Activated B cell treated with CpG ODN at 0.5 μM for 24 hours (primary cell): ENCODE measurements at regions of chr5 and their contacts with region 1.

Region 1: GRCh38 chr5:43040287-43041098 is at the start of gene ANXA2R:
- DNase-seq: peak; percentile 78
- ATAC-seq: peak; percentile 62
- H3K4me3 Mint-ChIP-seq: peak within 1 kb of the TSS; percentile 96
- H3K27ac Mint-ChIP-seq: peak within 1 kb of the TSS; percentile 98
- H3K4me1 Mint-ChIP-seq: peaks cover 53% of the 10 kb centered on the region
- H3K27me3 Mint-ChIP-seq: no peaks in the 10 kb centered on the region
- CTCF ChIP-seq: peak; percentile 39
- total RNA-seq, gene ANXA2R: 6.7 and 7.9 TPM in 2 replicates

Region 2: GRCh38 chr5:41924872-41925554 is 1115.5 kb before region 1 on chr5 and contains the start of gene FBXO4:
- CTCF ChIA-PET with region 1: no interaction called
- POLR2A ChIA-PET with region 1: no interaction called
- intact Hi-C with region 1: loop called (anchors 1 kb)
- DNase-seq: peak; percentile 82
- ATAC-seq: peak; percentile 95
- H3K4me3 Mint-ChIP-seq: peak within 1 kb of the TSS; percentile 93
- H3K27ac Mint-ChIP-seq: peak within 1 kb of the TSS; percentile 97
- H3K4me1 Mint-ChIP-seq: peaks cover 24% of the 10 kb centered on the region
- H3K27me3 Mint-ChIP-seq: no peaks in the 10 kb centered on the region
- CTCF ChIP-seq: no peak
- total RNA-seq, gene FBXO4: 14.8 and 15.9 TPM in 2 replicates

Region 3: GRCh38 chr5:42950440-42951292 is 89.8 kb before region 1 on chr5:
- CTCF ChIA-PET with region 1: interaction called, 38 read pairs
- POLR2A ChIA-PET with region 1: interaction called, 126 read pairs
- intact Hi-C with region 1: loop called (anchors 1 kb)
- DNase-seq: no peak
- ATAC-seq: peak; percentile 48
- H3K4me3 Mint-ChIP-seq: peak overlapping the region; percentile 94
- H3K27ac Mint-ChIP-seq: peak overlapping the region; percentile 98
- H3K4me1 Mint-ChIP-seq: peaks cover 33% of the 10 kb centered on the region
- H3K27me3 Mint-ChIP-seq: no peaks in the 10 kb centered on the region
- CTCF ChIP-seq: no peak

Region 4: GRCh38 chr5:43008369-43009153 is 31.9 kb before region 1 on chr5:
- CTCF ChIA-PET with region 1: interaction called, 25 read pairs
- POLR2A ChIA-PET with region 1: interaction called, 261 read pairs
- intact Hi-C with region 1: loop called (anchors 1 kb)
- DNase-seq: peak; percentile 77
- ATAC-seq: peak; percentile 53
- H3K4me3 Mint-ChIP-seq: peak overlapping the region; percentile 89
- H3K27ac Mint-ChIP-seq: peak overlapping the region; percentile 98
- H3K4me1 Mint-ChIP-seq: peaks cover 31% of the 10 kb centered on the region
- H3K27me3 Mint-ChIP-seq: no peaks in the 10 kb centered on the region
- CTCF ChIP-seq: no peak

Region 5: GRCh38 chr5:43027054-43027785 is 13.3 kb before region 1 on chr5:
- CTCF ChIA-PET with region 1: interaction called, 6 read pairs
- POLR2A ChIA-PET with region 1: interaction called, 475 read pairs
- intact Hi-C with region 1: no loop called
- DNase-seq: no peak
- ATAC-seq: no peak
- H3K4me3 Mint-ChIP-seq: no peak overlapping the region
- H3K27ac Mint-ChIP-seq: no peak overlapping the region
- H3K4me1 Mint-ChIP-seq: peaks cover 3% of the 10 kb centered on the region
- H3K27me3 Mint-ChIP-seq: no peaks in the 10 kb centered on the region
- CTCF ChIP-seq: no peak

Region 6: GRCh38 chr5:43105369-43106289 is 65.1 kb after region 1 on chr5:
- CTCF ChIA-PET with region 1: interaction called, 10 read pairs
- POLR2A ChIA-PET with region 1: no interaction called
- intact Hi-C with region 1: loop called (anchors 1 kb)
- DNase-seq: peak; percentile 73
- ATAC-seq: peak; percentile 99
- H3K4me3 Mint-ChIP-seq: peak overlapping the region; percentile 83
- H3K27ac Mint-ChIP-seq: peak overlapping the region; percentile 80
- H3K4me1 Mint-ChIP-seq: peaks cover 7% of the 10 kb centered on the region
- H3K27me3 Mint-ChIP-seq: peaks cover 2% of the 10 kb centered on the region
- CTCF ChIP-seq: peak; percentile 100

Region 7: GRCh38 chr5:43182401-43182800 is 141.9 kb after region 1 on chr5:
- CTCF ChIA-PET with region 1: no interaction called
- POLR2A ChIA-PET with region 1: no interaction called
- intact Hi-C with region 1: no loop called
- DNase-seq: no peak
- ATAC-seq: no peak
- H3K4me3 Mint-ChIP-seq: no peak overlapping the region
- H3K27ac Mint-ChIP-seq: no peak overlapping the region
- H3K4me1 Mint-ChIP-seq: no peaks in the 10 kb centered on the region
- H3K27me3 Mint-ChIP-seq: no peaks in the 10 kb centered on the region
- CTCF ChIP-seq: no peak